OCI-LY7 (cell line): ENCODE measurements at regions of chr1 and their contacts with region 1.

Region 1: DNA sequence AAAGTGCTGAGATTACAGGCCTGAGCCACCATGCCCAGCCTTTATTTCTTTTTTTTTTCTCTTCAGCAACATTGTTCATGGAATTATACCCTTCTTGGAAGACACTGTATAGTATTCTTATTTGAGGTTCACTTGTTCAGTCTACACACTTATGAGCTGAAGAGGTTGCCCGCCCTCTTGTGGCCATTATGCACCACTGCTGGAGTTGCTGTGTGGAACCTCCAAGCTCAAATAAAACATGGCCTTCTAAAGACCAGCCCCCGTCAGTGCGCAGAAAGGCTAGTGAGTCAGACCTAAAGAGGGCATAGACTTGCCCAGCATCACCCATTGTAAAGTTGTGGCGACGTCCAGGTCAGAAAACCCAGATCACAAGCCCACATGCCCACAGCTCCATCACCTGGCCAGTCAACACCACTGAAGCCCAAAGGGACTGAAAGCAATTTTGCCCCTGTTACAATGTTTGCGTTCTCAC is 20.4 kb downstream of the LURAP1 start:
- DNase-seq: peak; percentile 91
- H3K4me3 ChIP-seq: no peak overlapping the region
- H3K27ac ChIP-seq: peak overlapping the region; percentile 22
- H3K4me1 ChIP-seq: peaks cover 18% of the 10 kb centered on the region
- CTCF ChIP-seq: peak; percentile 100

Region 2: GRCh38 chr1:45617618-45618017 is 605.9 kb before region 1 on chr1:
- CTCF ChIA-PET with region 1: no interaction called
- POLR2A ChIA-PET with region 1: no interaction called
- intact Hi-C with region 1: loop called (anchors 10 kb)
- DNase-seq: no peak
- H3K4me3 ChIP-seq: no peak overlapping the region
- H3K27ac ChIP-seq: no peak overlapping the region
- H3K4me1 ChIP-seq: peaks cover 17% of the 10 kb centered on the region
- CTCF ChIP-seq: no peak

Region 3: DNA sequence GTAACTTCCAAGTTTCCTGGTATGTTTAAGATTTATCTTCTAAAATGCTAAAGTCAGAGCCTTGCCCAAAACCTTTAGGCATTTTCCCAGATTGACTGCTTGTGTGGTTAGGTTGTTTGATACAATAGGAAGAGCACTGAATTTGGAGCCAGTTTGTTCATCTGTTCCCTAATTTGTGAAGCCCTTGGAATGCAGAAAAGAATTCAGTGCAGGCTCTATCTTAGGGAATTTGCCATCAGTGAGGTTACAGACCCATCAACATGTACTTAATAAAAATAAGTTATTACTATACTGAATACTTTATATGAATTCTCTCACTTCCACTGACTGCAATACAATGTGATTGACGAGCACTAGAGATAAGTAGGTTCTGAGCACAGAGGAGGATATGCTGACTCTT is 211.3 kb before region 1 on chr1:
- CTCF ChIA-PET with region 1: interaction called, 15 read pairs
- POLR2A ChIA-PET with region 1: no interaction called
- intact Hi-C with region 1: no loop called
- DNase-seq: no peak
- H3K4me3 ChIP-seq: no peak overlapping the region
- H3K27ac ChIP-seq: no peak overlapping the region
- H3K4me1 ChIP-seq: no peaks in the 10 kb centered on the region
- CTCF ChIP-seq: no peak

Region 4: DNA sequence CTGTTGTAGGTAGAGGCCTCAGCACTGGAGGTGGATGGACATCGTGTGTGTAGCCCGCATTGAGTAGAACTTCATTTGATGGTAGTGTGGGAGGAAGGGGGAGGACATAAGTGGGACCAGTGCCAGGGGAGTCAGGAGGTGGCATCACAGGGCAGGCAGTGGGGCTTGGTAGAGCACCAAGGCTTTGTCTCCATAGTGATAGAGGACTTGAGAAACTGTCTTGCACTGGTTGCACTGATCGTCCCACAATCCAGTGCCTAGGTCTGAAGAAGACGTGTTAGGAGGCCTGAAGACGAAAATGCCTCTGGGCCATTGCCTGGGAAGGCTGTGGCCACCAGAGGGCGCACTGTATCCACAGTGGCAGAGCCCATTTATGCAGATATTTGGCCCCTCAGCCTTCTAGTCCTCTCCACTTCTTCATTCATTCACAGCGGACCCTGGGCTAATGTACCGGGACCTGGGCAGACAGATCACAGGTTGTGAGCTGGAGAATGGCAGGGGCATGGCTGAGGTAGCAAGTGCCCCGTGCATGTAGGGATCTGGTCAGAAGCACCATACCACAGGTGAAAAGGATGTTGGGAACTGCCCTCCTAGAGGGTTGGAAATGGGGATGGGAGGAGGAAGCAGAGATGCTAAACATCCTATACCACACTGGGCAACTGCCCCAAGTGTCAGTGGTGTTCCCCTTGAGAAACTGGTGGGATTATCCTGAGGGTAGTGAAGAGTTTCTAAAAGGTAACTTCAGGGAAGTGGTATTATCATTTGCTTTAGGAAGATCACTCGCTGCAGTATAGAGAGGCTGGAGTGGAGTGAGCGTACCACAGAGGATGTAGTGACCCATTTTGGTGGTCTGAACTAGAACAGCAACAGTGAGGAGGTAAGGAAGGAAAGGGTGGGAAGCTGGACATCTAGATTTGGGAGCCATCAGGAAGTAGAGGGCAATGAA is 186.3 kb before region 1 on chr1:
- CTCF ChIA-PET with region 1: no interaction called
- POLR2A ChIA-PET with region 1: interaction called, 3 read pairs
- intact Hi-C with region 1: loop called (anchors 1 kb)
- DNase-seq: peak; percentile 90
- H3K4me3 ChIP-seq: no peak overlapping the region
- H3K27ac ChIP-seq: peak overlapping the region; percentile 7
- H3K4me1 ChIP-seq: peaks cover 55% of the 10 kb centered on the region
- CTCF ChIP-seq: peak; percentile 97

Region 5: DNA sequence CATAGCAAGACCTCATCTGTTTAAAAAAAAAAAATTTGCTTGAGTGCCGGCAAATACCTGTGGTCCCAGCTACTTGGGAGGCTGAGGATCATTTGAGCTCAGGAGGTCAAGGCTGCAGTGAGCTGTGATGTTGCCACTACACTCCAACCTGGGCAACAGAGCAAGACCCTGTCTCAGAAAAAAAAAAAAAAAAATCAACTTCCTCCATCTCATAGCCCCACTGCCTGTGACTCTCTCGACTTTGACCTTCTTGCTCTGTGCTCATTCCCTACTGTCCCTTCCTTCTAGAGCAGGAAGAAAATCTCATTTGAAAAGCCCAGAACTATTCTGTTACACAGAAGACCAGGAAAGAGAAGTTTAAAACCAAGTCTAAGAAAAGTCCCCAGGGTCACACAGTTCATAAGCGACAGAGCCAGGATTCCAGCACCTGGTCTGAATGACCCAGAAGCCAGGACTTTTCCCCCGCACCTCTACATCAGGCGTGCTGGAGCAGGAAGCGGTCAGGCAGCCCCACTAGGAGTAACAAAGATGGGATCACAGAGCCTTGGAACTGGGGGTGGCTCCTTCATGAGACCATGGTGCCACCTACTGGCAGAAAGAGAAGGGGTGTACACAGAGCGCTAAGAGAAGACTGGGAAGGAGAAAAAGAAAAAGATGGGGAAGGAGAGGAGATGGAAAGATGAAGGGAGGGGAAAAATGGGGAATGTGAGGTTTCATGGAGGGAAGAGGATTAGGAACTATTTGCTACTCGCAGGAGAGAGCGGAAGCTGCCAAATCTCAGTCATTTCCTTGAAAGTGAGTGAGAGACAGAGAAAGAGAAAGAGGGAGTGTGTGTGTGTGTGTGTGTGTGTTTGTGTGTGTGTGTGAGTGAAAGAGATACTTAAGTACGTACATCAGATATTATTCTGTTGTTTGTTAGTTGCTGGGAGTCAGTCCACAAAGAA is 44.1 kb before region 1 on chr1:
- CTCF ChIA-PET with region 1: interaction called, 13 read pairs
- POLR2A ChIA-PET with region 1: interaction called, 7 read pairs
- intact Hi-C with region 1: loop called (anchors 1 kb)
- DNase-seq: peak; percentile 84
- H3K4me3 ChIP-seq: no peak overlapping the region
- H3K27ac ChIP-seq: no peak overlapping the region
- H3K4me1 ChIP-seq: peaks cover 51% of the 10 kb centered on the region
- CTCF ChIP-seq: peak; percentile 100

Region 6: DNA sequence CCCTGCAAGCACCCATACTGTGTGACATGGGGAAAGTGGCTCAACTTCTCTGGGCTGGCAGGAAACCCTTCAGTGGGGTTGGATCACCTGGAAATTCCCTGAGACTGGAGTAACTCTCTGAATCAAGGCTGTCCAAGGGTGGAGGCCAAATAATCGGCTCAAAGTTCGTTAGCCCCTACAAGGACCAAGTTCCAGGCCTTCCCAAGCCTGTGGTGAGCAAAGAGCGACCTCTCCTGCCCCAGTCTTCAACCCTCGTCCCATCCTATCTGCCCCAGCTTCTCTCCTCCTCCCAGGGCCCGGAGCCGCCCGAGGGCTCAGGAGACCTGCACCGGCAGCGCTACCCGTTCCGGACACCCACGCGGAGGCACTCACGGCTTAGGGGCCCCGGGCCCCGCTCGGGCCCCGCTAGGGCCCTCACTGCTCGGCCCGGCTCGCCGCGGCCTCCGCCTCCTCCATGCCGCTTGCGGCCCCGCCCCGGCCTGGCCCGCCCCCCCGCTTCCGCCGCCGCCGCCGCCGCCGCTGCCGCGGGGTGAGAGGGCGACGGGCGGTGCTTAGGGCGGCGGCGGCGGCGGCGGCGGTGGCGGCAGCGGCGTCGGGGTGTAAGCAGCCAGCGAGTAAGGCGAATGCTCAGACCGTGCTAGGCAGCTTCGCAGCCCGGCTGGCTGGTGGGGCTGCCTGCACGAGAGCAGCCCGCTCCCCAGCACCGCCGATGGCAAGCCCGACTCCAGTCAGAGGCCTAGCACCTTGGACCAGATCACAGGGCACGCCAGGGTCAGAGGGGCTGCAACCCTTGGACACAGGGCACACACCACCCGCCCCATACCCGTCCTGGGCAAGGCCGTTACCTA is 25.3 kb before region 1 on chr1 and contains the start of gene POMGNT1:
- CTCF ChIA-PET with region 1: interaction called, 4 read pairs
- POLR2A ChIA-PET with region 1: interaction called, 6 read pairs
- intact Hi-C with region 1: loop called (anchors 1 kb)
- DNase-seq: peak; percentile 76
- H3K4me3 ChIP-seq: peak within 1 kb of the TSS; percentile 70
- H3K27ac ChIP-seq: peak within 1 kb of the TSS; percentile 57
- H3K4me1 ChIP-seq: peaks cover 25% of the 10 kb centered on the region
- CTCF ChIP-seq: peak; percentile 69
- total RNA-seq, gene POMGNT1: 26.8 and 37.3 TPM in 2 replicates

Region 7: DNA sequence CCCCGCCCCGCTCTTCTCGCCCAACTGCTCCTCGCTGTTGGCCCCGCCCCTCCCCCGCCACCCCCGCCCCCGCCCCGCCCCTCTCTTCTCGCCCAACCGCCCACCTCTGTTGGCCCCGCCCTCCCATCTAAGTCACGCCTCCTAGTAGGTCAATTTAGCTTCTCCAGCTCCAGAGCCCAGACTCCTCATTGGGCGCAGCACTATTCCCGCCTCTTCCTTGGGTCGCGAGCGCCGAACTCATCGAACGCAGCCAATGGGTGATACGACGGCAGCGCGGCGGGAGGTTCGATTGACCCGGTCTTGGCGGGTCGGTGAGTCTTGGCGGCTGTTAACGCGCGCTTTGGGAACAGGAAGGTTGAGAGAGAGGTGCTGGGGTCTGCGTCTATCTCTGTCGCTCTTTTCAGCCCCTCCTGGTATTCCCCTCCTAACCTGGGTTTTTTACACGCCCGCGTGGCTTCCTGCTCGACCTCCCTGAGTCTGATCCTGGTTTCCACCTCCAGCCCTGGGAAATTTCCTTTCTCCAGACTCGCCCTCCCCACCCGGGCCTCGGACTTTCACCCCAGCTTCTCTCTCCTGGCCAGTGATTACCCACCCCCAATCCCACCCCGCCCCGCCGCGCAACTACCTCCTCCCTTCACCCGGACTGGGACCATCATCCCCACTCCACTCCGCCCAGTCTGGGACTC is 24.1 kb after region 1 on chr1 and contains the start of gene RAD54L:
- CTCF ChIA-PET with region 1: interaction called, 10 read pairs
- POLR2A ChIA-PET with region 1: interaction called, 6 read pairs
- intact Hi-C with region 1: no loop called
- DNase-seq: peak; percentile 100
- H3K4me3 ChIP-seq: peak within 1 kb of the TSS; percentile 86
- H3K27ac ChIP-seq: peak within 1 kb of the TSS; percentile 71
- H3K4me1 ChIP-seq: peaks cover 32% of the 10 kb centered on the region
- CTCF ChIP-seq: no peak
- total RNA-seq, gene RAD54L: 53.3 and 62.6 TPM in 2 replicates